PC-9 (cell line): ENCODE measurements at regions of chr9 and their contacts with region 1.

Region 1: GRCh38 chr9:88258027-88258426 is 119.8 kb upstream of the SPATA31C2 start:
- DNase-seq: no peak
- H3K4me3 ChIP-seq: no peak overlapping the region
- H3K27ac ChIP-seq: no peak overlapping the region
- H3K4me1 ChIP-seq: peaks cover 20% of the 10 kb centered on the region
- H3K27me3 ChIP-seq: no peaks in the 10 kb centered on the region
- CTCF ChIP-seq: no peak

Region 2: GRCh38 chr9:87857141-87857947 is 400.7 kb before region 1 on chr9:
- CTCF ChIA-PET with region 1: no interaction called
- POLR2A ChIA-PET with region 1: interaction called, 28 read pairs
- intact Hi-C with region 1: no loop called
- DNase-seq: no peak
- H3K4me3 ChIP-seq: no peak overlapping the region
- H3K27ac ChIP-seq: no peak overlapping the region
- H3K4me1 ChIP-seq: peaks cover 14% of the 10 kb centered on the region
- H3K27me3 ChIP-seq: no peaks in the 10 kb centered on the region
- CTCF ChIP-seq: no peak

Region 3: DNA sequence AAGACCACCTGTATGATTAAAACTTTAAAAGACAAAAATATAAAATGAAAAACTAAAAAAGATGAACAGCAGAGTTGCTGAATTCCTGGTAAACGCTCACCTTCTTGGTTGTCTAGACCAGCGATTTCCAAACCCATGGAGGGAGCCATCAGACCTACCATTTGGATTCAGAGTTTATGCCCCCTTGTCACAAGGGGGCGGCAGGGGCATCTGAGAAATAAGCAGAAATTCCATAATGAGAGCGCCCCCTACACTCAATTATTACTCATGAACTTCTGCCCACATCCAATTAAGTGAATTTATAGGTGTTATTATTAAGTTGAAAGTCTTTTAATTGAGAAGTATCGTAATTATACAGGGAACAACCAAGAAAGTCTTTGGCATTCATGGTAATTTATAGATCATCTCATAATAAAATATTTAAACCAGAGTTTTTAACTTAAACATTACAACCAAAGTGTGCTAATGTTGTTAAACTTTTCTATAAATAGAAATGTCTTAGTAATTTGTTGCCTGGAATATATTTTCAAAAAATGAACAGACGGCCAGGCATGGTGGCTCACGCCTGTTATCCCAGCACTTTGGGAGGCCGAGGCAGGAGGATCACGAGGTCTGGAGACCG is 84.5 kb before region 1 on chr9:
- CTCF ChIA-PET with region 1: no interaction called
- POLR2A ChIA-PET with region 1: no interaction called
- intact Hi-C with region 1: no loop called
- DNase-seq: peak; percentile 70 to 75
- H3K4me3 ChIP-seq: no peak overlapping the region
- H3K27ac ChIP-seq: no peak overlapping the region
- H3K4me1 ChIP-seq: no peaks in the 10 kb centered on the region
- H3K27me3 ChIP-seq: no peaks in the 10 kb centered on the region
- CTCF ChIP-seq: peak; percentile 88

Region 4: DNA sequence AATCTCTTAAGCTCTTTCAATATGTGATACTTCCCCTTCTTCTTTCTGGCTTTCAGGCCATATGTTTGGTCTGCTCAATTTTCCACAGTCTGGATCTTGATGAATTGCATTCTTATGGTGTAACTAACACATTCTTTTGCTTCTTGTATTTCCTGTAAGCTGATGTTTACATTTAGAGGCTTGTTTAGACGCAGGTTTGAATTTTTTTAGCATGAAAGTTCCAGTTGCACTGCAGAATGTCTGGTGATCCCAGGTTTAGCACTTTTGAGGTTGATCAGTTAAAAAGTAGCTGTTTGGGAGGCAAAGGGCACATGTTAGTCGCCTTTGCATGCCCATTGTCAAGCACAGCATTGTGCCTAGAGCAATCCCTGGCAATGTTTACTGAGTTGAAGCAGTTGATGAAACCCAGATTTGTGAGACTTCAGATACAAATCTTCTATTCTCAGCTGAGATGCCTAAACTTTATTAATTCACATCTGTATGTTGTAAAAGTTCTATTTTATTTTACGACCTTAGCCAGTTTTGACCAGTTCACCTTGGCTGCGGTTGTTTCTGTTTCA is 60.2 kb before region 1 on chr9:
- CTCF ChIA-PET with region 1: no interaction called
- POLR2A ChIA-PET with region 1: interaction called, 21 read pairs
- intact Hi-C with region 1: no loop called
- DNase-seq: peak; percentile 46 to 98
- H3K4me3 ChIP-seq: peak overlapping the region; percentile 43; the same call in 1 of the 2 replicates
- H3K27ac ChIP-seq: peak overlapping the region; percentile 96
- H3K4me1 ChIP-seq: peaks cover 47% of the 10 kb centered on the region
- H3K27me3 ChIP-seq: no peaks in the 10 kb centered on the region
- CTCF ChIP-seq: no peak

Region 5: GRCh38 chr9:88399966-88400365 is 141.9 kb after region 1 on chr9:
- CTCF ChIA-PET with region 1: no interaction called
- POLR2A ChIA-PET with region 1: no interaction called
- intact Hi-C with region 1: no loop called
- DNase-seq: peak; percentile 56 to 75
- H3K4me3 ChIP-seq: no peak overlapping the region
- H3K27ac ChIP-seq: peak overlapping the region; percentile 52
- H3K4me1 ChIP-seq: peaks cover 25% of the 10 kb centered on the region
- H3K27me3 ChIP-seq: no peaks in the 10 kb centered on the region
- CTCF ChIP-seq: no peak